ENCODE measurements at regions of chr12 and their contacts with region 1.

Region 1: DNA sequence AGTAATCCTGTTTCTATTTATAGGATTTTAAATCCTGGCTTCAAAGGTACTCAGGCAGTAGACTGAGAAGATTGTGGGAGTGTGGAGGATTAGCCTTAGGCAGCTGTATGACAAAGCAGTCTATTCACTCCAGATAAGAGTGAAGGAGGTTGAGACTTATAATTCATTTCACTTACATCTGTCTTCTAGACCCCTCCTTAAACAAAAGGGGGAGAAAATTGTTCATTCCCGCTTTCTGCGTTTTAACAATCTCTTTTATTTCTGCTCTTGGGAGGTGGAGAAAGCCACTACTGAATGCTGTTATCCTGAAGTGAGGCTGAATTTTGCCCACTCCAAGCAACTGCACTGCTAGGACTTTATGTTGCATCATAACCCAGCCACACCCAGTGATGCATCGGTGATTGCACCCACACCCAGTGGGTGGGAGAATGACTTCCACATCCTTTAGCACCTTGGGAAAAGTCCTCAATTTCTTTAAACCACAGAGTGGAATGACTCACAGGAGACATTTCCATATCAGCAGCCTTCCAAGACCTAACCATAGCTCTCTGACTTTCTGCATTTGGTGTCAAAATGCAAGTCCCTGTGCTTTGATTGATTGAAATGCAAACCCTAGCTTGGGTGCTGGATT is 382.5 kb upstream of the ATP2B1 start:
- DNase-seq: peak; percentile 98
- ATAC-seq: peak; percentile 95
- H3K4me3 ChIP-seq: peak overlapping the region; percentile 41; the same call in 1 of the 2 replicates
- H3K27ac ChIP-seq: peak overlapping the region; percentile 98
- H3K4me1 ChIP-seq: peaks cover 23% of the 10 kb centered on the region
- H3K27me3 ChIP-seq: no peaks in the 10 kb centered on the region
- CTCF ChIP-seq: no peak

Region 2: GRCh38 chr12:90253674-90254181 is 162.6 kb after region 1 on chr12:
- CTCF ChIA-PET with region 1: no interaction called
- POLR2A ChIA-PET with region 1: no interaction called
- intact Hi-C with region 1: loop called (anchors 5 kb)
- DNase-seq: peak; percentile 98
- ATAC-seq: peak; percentile 100
- H3K4me3 ChIP-seq: no peak overlapping the region
- H3K27ac ChIP-seq: peak overlapping the region; percentile 68
- H3K4me1 ChIP-seq: peaks cover 26% of the 10 kb centered on the region
- H3K27me3 ChIP-seq: no peaks in the 10 kb centered on the region
- CTCF ChIP-seq: peak; percentile 74

Region 3: GRCh38 chr12:90441431-90441830 is 350.3 kb after region 1 on chr12:
- CTCF ChIA-PET with region 1: no interaction called
- POLR2A ChIA-PET with region 1: no interaction called
- intact Hi-C with region 1: no loop called
- DNase-seq: no peak
- ATAC-seq: no peak
- H3K4me3 ChIP-seq: no peak overlapping the region
- H3K27ac ChIP-seq: no peak overlapping the region
- H3K4me1 ChIP-seq: no peaks in the 10 kb centered on the region
- H3K27me3 ChIP-seq: no peaks in the 10 kb centered on the region
- CTCF ChIP-seq: peak; percentile 27; the same call in 1 of the 2 replicates